ENCODE measurements at regions of chr19 and their contacts with region 1.

Region 1: DNA sequence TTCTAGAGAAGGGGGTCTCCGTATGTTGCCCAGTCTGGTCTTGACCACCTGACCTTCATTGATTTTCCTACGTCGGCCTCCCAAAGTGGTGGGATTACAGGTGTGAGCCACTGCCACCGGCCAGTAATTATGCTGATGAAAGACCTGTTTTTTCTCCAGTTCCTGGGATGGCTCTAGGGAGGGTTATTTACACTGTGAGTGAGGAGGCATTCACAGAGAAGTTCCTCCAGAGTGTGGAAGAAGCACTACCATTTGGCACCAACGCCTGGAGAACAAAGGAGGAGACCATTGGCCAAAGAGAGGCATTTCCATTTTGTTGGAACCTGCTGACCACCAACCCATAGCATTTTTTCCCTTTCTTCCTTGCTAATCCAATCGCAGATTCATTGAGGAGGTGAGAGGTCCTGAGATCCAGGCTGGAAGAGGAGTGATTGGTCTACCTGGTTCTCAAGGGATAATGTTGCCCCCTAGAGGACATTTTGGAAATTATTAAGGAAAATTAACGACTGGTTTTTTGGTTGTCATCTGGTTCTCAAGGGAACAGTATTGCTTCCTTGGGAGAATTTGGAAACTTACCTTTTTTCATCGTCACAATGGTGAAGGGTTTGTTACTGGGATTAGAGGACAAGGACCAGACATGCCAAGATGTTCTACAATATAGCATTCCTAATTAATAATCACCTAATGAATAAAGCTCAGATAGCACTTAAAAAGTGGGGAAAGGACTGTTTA is 5.5 kb upstream of the SAE1 start:
- DNase-seq: peak; percentile 52 to 77 (median 69)
- H3K4me3 ChIP-seq: no peak overlapping the region
- H3K4me3 Mint-ChIP-seq: no peak overlapping the region
- H3K27ac ChIP-seq: no peak overlapping the region
- H3K27ac Mint-ChIP-seq: no peak overlapping the region
- H3K4me1 ChIP-seq: no peaks in the 10 kb centered on the region
- H3K4me1 Mint-ChIP-seq: peaks cover 2% of the 10 kb centered on the region
- H3K27me3 ChIP-seq: no peaks in the 10 kb centered on the region
- H3K27me3 Mint-ChIP-seq: peaks cover 3 to 8% (median 5%) of the 10 kb centered on the region in 3 donors
- CTCF ChIP-seq: peak; percentile 77

Region 2: DNA sequence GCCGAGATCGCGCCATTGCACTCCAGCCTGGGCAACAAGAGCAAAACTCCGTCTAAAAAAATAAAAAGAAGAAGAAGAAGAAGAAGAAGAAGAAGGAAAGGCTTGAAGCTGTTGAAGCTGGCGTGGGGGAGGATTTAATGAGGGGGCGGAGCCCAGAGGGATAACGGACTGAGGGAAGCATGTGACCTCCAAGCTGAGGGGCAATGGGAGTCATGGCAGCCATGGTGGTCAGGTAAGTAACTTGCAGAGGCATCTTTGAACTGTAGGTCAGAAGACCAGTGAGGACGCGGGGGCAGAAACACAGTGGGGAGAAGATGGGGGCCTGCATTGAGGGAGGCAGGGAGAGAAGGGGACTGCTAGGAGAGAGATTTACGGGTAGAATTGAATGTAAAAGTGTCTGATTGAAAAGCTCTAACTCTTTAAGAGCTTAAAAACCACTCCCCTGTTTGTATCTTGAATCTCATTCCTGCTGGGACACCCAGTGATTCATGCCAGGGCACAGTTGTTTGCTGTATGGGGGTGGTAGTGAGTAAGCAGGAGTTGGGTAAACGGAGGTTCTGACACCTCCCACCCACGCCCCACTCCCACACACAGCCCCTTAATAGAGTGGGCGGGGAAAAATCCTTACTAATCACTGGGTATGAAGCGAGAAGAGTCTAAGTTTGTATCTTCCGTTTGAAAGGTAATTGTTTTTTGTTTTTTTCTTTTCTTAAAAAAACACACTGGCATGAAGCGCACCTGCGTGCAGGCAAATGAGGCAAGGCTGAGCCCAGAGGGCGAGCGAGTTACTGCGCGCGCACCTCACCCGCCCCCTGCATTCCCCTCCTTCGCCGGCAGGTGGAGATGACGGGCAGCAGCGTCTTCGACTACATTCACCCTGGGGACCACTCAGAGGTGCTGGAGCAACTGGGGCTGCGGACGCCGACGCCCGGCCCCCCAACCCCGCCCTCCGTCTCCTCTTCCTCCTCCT is 89.7 kb before region 1 on chr19:
- intact Hi-C with region 1: loop called in 1 of 2 experiments (anchors 5 kb)
- DNase-seq: peak; percentile 65 to 76 (median 68)
- H3K4me3 ChIP-seq: peak overlapping the region; percentile 15 to 70 (median 35)
- H3K4me3 Mint-ChIP-seq: peak overlapping the region; percentile 88 to 93
- H3K27ac ChIP-seq: no peak overlapping the region
- H3K27ac Mint-ChIP-seq: peak overlapping the region in 4 of 7 donors; percentile 12 to 94 (median 58)
- H3K4me1 ChIP-seq: peaks cover 16 to 20% of the 10 kb centered on the region in 2 donors
- H3K4me1 Mint-ChIP-seq: peaks cover 17% of the 10 kb centered on the region
- H3K27me3 ChIP-seq: peaks cover 0 to 17% of the 10 kb centered on the region in 2 donors
- H3K27me3 Mint-ChIP-seq: peaks cover 39 to 59% (median 42%) of the 10 kb centered on the region in 3 donors
- CTCF ChIP-seq: peak; percentile 99

Region 3: GRCh38 chr19:47058621-47059020 is 66.5 kb before region 1 on chr19:
- intact Hi-C with region 1: no loop called
- DNase-seq: no peak
- H3K4me3 ChIP-seq: no peak overlapping the region
- H3K4me3 Mint-ChIP-seq: no peak overlapping the region
- H3K27ac ChIP-seq: no peak overlapping the region
- H3K27ac Mint-ChIP-seq: no peak overlapping the region
- H3K4me1 ChIP-seq: no peaks in the 10 kb centered on the region
- H3K4me1 Mint-ChIP-seq: no peaks in the 10 kb centered on the region
- H3K27me3 ChIP-seq: no peaks in the 10 kb centered on the region
- H3K27me3 Mint-ChIP-seq: peaks cover 6 to 19% (median 6%) of the 10 kb centered on the region in 3 donors
- CTCF ChIP-seq: no peak

Region 4: DNA sequence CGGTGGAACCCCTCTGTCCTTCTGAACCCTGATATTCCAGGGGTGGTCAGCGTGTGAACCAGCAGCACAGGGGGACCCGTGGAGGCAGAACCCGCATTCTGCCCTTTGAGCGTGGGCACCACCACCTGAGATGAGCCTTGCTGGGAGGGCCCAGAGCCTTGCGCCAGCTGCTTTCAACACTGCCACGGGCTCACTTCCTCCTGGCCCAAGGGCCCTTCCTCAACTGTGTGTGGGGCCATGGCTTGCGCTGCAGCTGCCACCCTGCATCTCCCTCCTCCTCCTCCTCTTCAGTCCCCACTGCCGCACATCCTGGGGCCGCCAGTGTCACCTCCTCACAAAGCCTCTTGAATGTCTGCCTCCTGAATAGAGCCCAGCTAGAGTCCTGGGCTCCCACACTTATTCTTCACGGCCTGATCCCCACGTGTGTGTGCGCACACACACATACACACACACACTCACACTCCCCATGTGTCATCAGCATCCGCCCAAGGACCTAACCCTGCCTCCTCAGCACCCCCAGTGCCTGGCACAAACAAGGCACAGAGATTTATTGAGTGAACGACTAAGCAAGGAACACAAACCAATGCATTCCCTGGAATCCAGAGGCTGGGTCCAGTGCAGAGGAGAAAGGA is 49.8 kb before region 1 on chr19:
- intact Hi-C with region 1: loop called (anchors 1 kb)
- DNase-seq: peak; percentile 62 to 66 (median 64)
- H3K4me3 ChIP-seq: peak overlapping the region in 1 of 3 experiments; percentile 19
- H3K4me3 Mint-ChIP-seq: peak overlapping the region; percentile 61 to 90
- H3K27ac ChIP-seq: peak overlapping the region; percentile 1 to 51
- H3K27ac Mint-ChIP-seq: peak overlapping the region; percentile 84 to 95 (median 91)
- H3K4me1 ChIP-seq: peaks cover 19% of the 10 kb centered on the region in 2 donors
- H3K4me1 Mint-ChIP-seq: peaks cover 24% of the 10 kb centered on the region
- H3K27me3 ChIP-seq: no peaks in the 10 kb centered on the region
- H3K27me3 Mint-ChIP-seq: peaks cover 0 to 2% (median 0%) of the 10 kb centered on the region in 3 donors
- CTCF ChIP-seq: no peak

Region 5: GRCh38 chr19:47086280-47086679 is 38.8 kb before region 1 on chr19:
- intact Hi-C with region 1: no loop called
- DNase-seq: no peak
- H3K4me3 ChIP-seq: no peak overlapping the region
- H3K4me3 Mint-ChIP-seq: no peak overlapping the region
- H3K27ac ChIP-seq: no peak overlapping the region
- H3K27ac Mint-ChIP-seq: peak overlapping the region in 3 of 7 donors; percentile 18 to 65 (median 30)
- H3K4me1 ChIP-seq: no peaks in the 10 kb centered on the region
- H3K4me1 Mint-ChIP-seq: no peaks in the 10 kb centered on the region
- H3K27me3 ChIP-seq: no peaks in the 10 kb centered on the region
- H3K27me3 Mint-ChIP-seq: peaks cover 0 to 2% (median 0%) of the 10 kb centered on the region in 3 donors
- CTCF ChIP-seq: no peak

Region 6: GRCh38 chr19:47330466-47330869 is 205.4 kb after region 1 on chr19:
- intact Hi-C with region 1: no loop called
- DNase-seq: peak; percentile 71 to 84 (median 72)
- H3K4me3 ChIP-seq: peak overlapping the region in 1 of 3 experiments; percentile 60
- H3K4me3 Mint-ChIP-seq: peak overlapping the region; percentile 63 to 76
- H3K27ac ChIP-seq: peak overlapping the region; percentile 97 to 98
- H3K27ac Mint-ChIP-seq: peak overlapping the region; percentile 94 to 99 (median 96)
- H3K4me1 ChIP-seq: peaks cover 48 to 65% of the 10 kb centered on the region in 2 donors
- H3K4me1 Mint-ChIP-seq: peaks cover 61% of the 10 kb centered on the region
- H3K27me3 ChIP-seq: no peaks in the 10 kb centered on the region
- H3K27me3 Mint-ChIP-seq: peaks cover 2 to 8% (median 3%) of the 10 kb centered on the region in 3 donors
- CTCF ChIP-seq: no peak

Measured in CD14-positive monocyte (primary cell).